Heart right ventricle (tissue), 16 donors: ENCODE measurements at regions of chr15 and their contacts with region 1.

Region 1: GRCh38 chr15:68875377-68876116 is 54.8 kb upstream of the SPESP1 start:
- DNase-seq: peak; percentile 92
- ATAC-seq: peak; percentile 90 to 98 (median 96)
- H3K4me3 ChIP-seq: peak overlapping the region in 9 of 10 donors; percentile 11 to 54 (median 45)
- H3K27ac ChIP-seq: no peak overlapping the region
- H3K4me1 ChIP-seq: peaks cover 0 to 10% (median 0%) of the 10 kb centered on the region in 9 donors
- H3K27me3 ChIP-seq: peaks cover 0 to 18% (median 0%) of the 10 kb centered on the region in 7 donors
- CTCF ChIP-seq: peak; percentile 79 to 93 (median 87)

Region 2: DNA sequence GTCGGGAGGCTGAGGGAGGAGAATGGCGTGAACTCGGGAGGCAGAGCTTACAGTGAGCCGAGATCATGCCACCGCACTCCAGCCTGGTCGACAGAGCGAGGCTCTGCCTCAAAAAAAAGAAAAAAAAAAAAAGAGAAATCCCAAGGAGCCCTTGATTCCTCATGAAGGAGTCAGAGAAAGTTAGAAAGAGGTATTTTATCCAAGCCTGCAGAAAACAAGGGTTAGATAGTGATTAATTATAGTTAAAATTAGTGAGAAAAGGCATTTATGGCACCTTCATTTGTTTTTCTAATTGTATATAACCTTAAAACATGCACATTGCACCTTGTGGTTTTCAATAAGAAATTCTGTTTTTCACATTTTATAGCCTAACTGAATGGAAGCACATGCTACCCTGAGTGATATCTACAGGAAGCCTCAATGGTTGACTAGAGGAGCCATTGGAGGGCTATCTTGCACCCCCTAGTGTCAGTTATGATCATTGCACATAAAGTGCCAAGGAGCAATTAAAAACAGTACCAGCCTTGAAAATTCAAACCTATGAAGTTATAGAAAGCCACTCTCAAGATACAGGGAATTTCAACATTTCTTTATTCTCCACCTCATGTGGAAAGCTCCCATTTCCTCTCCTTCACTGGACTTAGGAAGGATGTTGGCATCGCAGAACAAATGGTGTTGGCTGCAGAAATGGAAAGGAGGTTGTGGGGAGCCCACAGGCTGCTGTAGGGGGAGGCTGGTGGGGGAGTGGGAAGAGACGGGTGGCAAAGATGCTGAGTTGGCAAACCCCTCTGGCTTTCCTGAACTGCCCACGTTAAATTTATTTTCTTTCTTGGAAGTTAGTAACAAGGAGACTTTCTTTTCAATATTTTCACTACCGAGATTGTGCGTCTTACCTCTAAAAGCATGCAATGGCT is 492.1 kb before region 1 on chr15:
- intact Hi-C with region 1: no loop called
- DNase-seq: peak in 1 of 2 donors; percentile 46
- ATAC-seq: peak in 6 of 8 donors; percentile 50 to 72 (median 62)
- H3K4me3 ChIP-seq: no peak overlapping the region
- H3K27ac ChIP-seq: no peak overlapping the region
- H3K4me1 ChIP-seq: peaks cover 0 to 11% (median 0%) of the 10 kb centered on the region in 9 donors
- H3K27me3 ChIP-seq: peaks cover 0 to 5% (median 0%) of the 10 kb centered on the region in 7 donors
- CTCF ChIP-seq: peak; percentile 64 to 88 (median 81)

Region 3: DNA sequence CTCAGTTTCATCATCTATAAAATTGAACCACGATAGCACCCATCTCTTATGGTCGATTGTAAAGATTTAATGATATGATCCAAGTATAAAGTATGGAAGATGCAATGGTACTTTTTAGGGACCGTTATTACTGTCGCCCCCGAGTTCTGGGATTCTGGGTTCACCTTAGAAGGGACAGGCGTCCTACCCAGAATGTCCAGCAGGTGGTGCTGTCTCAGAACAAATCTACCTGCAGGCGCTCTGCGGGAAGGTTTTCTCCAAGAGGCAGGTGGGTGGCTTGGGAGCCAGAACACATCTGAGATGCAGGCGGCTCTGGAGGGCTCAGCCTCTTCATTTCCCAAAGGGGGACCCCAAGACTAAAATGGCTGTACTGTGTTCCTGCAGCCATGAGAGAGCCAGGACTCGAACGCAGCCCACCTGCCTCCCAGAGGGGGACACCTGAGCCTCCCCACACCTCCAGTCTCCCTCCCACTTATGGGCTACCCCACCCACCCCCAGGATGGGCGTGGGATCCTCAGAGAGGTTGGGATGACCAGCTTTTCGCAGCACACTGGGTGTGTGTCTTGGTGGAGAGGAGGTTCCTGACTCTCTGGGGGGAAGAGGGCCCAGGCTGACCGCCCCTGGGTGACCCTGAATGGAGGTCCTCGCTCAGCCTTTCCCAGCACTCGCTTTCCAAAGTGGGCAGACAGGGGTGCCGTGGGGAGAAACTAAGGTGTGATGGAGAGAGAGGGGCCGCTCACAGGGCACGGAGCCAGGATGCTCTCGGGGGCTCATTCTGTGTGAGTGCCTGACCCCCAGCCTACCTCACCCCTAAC is 324.9 kb before region 1 on chr15:
- intact Hi-C with region 1: loop called in 8 of 10 experiments (anchors 2 to 5 kb)
- DNase-seq: peak; percentile 67 to 72
- ATAC-seq: peak in 7 of 8 donors; percentile 34 to 56 (median 48)
- H3K4me3 ChIP-seq: no peak overlapping the region
- H3K27ac ChIP-seq: no peak overlapping the region
- H3K4me1 ChIP-seq: peaks cover 0 to 11% (median 0%) of the 10 kb centered on the region in 9 donors
- H3K27me3 ChIP-seq: no peaks in the 10 kb centered on the region
- CTCF ChIP-seq: peak; percentile 89 to 96 (median 94)

Region 4: DNA sequence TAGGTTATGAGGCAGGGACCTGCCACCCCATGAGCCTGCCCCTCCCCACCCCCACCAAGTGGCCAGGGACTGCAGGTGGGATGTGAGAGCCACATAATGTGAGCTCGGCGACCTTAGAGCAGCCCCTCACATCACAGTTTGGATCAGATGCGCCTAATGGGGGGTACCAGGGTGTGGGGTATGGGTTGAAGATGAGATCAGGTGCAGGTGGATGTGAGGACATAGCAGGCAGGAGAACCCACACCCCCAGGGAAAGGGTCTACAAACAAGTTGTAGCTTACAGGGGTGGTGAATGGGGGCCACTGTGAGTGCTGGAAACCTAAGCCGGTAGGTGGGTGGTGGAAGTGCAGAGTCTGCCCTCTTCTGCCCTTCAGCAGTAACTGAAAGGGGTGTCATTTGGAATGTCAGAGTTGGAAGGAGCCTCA is 202.8 kb before region 1 on chr15:
- intact Hi-C with region 1: loop called in 5 of 10 experiments (anchors 5 to 10 kb)
- DNase-seq: no peak
- ATAC-seq: peak in 1 of 8 donors; percentile 29
- H3K4me3 ChIP-seq: no peak overlapping the region
- H3K27ac ChIP-seq: no peak overlapping the region
- H3K4me1 ChIP-seq: peaks cover 4 to 28% (median 23%) of the 10 kb centered on the region in 9 donors
- H3K27me3 ChIP-seq: no peaks in the 10 kb centered on the region
- CTCF ChIP-seq: peak in 5 of 9 donors; percentile 11 to 32 (median 24)

Region 5: DNA sequence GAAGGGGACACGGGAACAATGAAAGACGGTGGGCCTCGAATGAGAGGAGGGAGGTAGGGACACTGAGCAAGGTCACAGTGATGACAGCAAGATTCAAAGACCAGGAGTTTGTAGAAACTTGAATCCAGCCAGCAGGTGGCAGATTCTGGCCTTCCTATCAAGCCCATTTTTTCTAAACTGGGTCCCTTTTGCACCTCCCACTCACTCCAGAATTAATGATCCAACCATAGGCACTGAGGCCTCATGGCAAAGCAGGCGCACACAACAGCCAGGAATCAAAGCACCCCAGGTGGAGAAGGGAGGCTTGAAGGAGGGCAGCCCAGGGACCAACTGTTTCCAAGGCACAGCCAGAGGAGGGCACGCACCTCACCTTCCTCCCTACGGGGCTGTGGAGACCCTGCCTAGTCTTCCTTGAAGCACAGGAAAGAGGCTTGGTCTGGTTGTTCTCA is 145.1 kb before region 1 on chr15:
- intact Hi-C with region 1: loop called (anchors 1 to 5 kb)
- DNase-seq: peak in 1 of 2 donors; percentile 65
- ATAC-seq: peak; percentile 36 to 64 (median 52)
- H3K4me3 ChIP-seq: peak overlapping the region in 2 of 10 donors; percentile 9 to 21
- H3K27ac ChIP-seq: peak overlapping the region; percentile 49 to 92 (median 80)
- H3K4me1 ChIP-seq: peaks cover 14 to 85% (median 65%) of the 10 kb centered on the region in 9 donors
- H3K27me3 ChIP-seq: no peaks in the 10 kb centered on the region
- CTCF ChIP-seq: peak; percentile 30 to 78 (median 63)

Region 6: DNA sequence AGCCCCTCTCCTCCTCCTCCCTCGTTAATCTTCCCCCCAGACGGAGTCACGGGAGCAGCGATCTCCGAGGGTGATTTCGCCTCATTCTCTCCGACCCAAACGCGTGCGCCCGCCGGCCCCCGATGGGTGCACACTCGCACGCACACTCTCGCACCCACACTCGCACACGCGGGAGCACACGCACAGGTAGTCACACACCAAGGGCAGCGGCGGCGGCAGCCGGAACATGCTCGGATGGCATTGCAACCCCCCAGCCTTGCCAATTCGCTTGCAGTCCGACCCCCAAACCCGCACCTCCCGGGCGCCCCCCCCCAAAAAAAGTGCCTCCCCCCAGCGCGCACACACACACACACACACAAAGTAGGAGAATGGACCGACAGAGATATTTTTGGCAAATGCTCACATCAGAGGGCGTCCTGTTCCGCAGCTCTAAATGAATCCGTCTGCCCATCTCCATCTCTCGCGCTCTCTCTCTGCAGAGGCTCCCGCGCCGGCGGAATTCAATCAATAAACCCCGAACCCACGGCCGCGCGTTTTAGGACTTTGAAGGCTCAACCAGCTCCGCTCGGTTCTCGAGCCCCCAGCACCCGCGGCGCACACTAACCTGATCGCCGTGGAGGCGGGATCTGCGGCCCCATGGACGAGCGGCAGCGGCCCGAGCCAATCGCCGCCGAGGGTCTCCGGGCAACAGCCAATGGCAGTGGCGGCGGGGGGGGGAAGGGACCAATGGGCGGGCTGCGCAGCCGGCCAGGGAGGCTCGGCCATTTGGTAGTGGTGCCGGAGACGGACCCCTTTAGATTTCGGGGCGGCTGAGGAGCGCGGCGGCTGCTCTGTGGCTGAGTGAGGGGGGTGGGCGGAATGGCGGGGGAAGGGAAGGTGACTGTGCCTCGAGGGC is 55.0 kb before region 1 on chr15 and contains the start of gene ANP32A:
- intact Hi-C with region 1: loop called in 1 of 10 experiments (anchors 10 kb)
- DNase-seq: peak; percentile 99
- ATAC-seq: peak; percentile 77 to 92 (median 86)
- H3K4me3 ChIP-seq: peak within 1 kb of the TSS; percentile 73 to 94 (median 90)
- H3K27ac ChIP-seq: peak within 1 kb of the TSS; percentile 99 to 100 (median 100)
- H3K4me1 ChIP-seq: peaks cover 7 to 32% (median 26%) of the 10 kb centered on the region in 9 donors
- H3K27me3 ChIP-seq: no peaks in the 10 kb centered on the region
- CTCF ChIP-seq: no peak
- total RNA-seq, gene ANP32A: 122 to 201 (median 152) TPM